ENCODE measurements at regions of chr15 and their contacts with region 1.

Region 1: DNA sequence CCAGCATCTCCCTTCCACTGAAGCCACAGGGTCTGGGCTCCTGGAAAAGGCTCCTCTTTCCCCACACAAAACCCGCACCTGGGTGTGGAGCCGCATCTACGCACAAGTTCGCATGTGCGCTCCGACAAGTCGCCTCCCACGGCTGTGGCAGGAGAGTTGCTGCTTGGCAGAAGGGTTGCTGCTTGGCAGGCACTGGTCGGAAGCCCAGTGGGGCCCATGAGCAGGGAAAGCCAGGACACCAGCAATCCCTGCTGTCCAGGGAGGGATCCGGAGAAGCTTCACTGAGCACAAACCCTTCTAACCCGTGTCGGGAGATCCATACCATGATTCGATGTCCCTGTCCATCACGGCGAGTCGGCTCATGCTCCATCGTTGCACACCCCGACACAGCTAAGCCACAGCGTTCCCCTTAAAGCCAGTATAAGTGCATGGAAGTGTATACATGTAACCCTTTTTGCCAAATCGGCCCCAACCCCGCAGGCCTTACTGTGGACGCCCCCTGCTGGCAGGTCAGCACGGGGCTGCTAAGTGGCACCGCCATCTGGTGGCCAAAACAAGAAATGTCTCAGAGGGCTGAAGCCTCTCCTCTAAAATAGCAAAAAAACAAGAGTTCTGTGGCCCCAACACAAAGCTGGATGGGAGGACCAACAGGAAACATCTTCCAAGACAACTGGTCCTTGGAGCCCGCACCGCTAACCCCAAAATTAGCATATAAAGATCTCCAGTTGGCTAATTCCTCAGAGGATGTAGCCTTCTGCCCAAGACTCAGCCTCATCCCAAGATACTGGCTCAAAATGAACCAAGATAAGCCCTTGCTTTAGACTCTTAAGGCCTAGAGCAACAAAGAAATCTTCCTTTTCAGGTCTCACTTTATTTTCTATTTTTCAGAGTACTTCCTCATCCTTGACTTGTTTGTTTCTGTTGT is 8.3 kb downstream of the ANKRD63 start:
- DNase-seq: peak; percentile 91
- ATAC-seq: peak; percentile 60
- H3K4me3 Mint-ChIP-seq: no peak overlapping the region
- H3K27ac Mint-ChIP-seq: no peak overlapping the region
- H3K4me1 Mint-ChIP-seq: peaks cover 21% of the 10 kb centered on the region
- H3K27me3 Mint-ChIP-seq: peaks cover 25% of the 10 kb centered on the region

Region 2: GRCh38 chr15:40197434-40197833 is 77.2 kb before region 1 on chr15:
- CTCF ChIA-PET with region 1: interaction called, 12 read pairs
- POLR2A ChIA-PET with region 1: no interaction called
- DNase-seq: peak; percentile 32
- ATAC-seq: peak; percentile 53
- H3K4me3 Mint-ChIP-seq: no peak overlapping the region
- H3K27ac Mint-ChIP-seq: peak overlapping the region; percentile 72
- H3K4me1 Mint-ChIP-seq: peaks cover 35% of the 10 kb centered on the region
- H3K27me3 Mint-ChIP-seq: no peaks in the 10 kb centered on the region

Region 3: DNA sequence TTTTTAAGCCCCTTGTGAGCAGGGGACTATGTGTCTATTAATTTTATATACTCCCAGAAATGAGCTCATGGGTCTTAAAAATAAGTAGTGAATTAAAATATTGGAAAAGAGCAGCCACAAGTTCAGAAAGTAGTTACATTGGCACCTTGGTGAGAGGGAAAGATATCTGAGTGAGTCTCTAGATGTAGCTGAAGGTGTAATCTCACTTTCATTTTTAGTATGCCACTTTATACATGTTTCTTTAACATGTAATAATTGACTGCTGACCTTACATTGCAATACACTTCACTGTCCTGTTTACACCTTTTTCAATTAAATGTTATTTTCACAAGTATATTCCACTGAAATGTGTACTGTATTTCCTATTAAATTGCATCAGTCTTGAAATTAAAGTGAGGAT is 47.9 kb before region 1 on chr15:
- CTCF ChIA-PET with region 1: interaction called, 214 read pairs
- POLR2A ChIA-PET with region 1: no interaction called
- DNase-seq: no peak
- ATAC-seq: no peak
- H3K4me3 Mint-ChIP-seq: no peak overlapping the region
- H3K27ac Mint-ChIP-seq: no peak overlapping the region
- H3K4me1 Mint-ChIP-seq: peaks cover 16% of the 10 kb centered on the region
- H3K27me3 Mint-ChIP-seq: no peaks in the 10 kb centered on the region

Region 4: GRCh38 chr15:40256638-40257235 is 17.9 kb before region 1 on chr15:
- CTCF ChIA-PET with region 1: interaction called, 45 read pairs
- POLR2A ChIA-PET with region 1: interaction called, 3 read pairs
- DNase-seq: no peak
- ATAC-seq: peak; percentile 35
- H3K4me3 Mint-ChIP-seq: no peak overlapping the region
- H3K27ac Mint-ChIP-seq: peak overlapping the region; percentile 52
- H3K4me1 Mint-ChIP-seq: peaks cover 12% of the 10 kb centered on the region
- H3K27me3 Mint-ChIP-seq: peaks cover 23% of the 10 kb centered on the region

Region 5: GRCh38 chr15:40307421-40308211 is 33.0 kb after region 1 on chr15 and contains the start of gene PLCB2:
- CTCF ChIA-PET with region 1: interaction called, 559 read pairs
- POLR2A ChIA-PET with region 1: interaction called, 21 read pairs
- DNase-seq: peak; percentile 82
- ATAC-seq: peak; percentile 81
- H3K4me3 Mint-ChIP-seq: peak within 1 kb of the TSS; percentile 99
- H3K27ac Mint-ChIP-seq: peak within 1 kb of the TSS; percentile 98
- H3K4me1 Mint-ChIP-seq: peaks cover 38% of the 10 kb centered on the region
- H3K27me3 Mint-ChIP-seq: peaks cover 13% of the 10 kb centered on the region
- total RNA-seq, gene PLCB2: 133 to 160 TPM

Region 6: GRCh38 chr15:40338041-40338657 is 63.5 kb after region 1 on chr15:
- CTCF ChIA-PET with region 1: interaction called, 101 read pairs
- POLR2A ChIA-PET with region 1: no interaction called
- DNase-seq: peak; percentile 83
- ATAC-seq: peak; percentile 87
- H3K4me3 Mint-ChIP-seq: no peak overlapping the region
- H3K27ac Mint-ChIP-seq: no peak overlapping the region
- H3K4me1 Mint-ChIP-seq: peaks cover 24% of the 10 kb centered on the region
- H3K27me3 Mint-ChIP-seq: no peaks in the 10 kb centered on the region

Region 7: DNA sequence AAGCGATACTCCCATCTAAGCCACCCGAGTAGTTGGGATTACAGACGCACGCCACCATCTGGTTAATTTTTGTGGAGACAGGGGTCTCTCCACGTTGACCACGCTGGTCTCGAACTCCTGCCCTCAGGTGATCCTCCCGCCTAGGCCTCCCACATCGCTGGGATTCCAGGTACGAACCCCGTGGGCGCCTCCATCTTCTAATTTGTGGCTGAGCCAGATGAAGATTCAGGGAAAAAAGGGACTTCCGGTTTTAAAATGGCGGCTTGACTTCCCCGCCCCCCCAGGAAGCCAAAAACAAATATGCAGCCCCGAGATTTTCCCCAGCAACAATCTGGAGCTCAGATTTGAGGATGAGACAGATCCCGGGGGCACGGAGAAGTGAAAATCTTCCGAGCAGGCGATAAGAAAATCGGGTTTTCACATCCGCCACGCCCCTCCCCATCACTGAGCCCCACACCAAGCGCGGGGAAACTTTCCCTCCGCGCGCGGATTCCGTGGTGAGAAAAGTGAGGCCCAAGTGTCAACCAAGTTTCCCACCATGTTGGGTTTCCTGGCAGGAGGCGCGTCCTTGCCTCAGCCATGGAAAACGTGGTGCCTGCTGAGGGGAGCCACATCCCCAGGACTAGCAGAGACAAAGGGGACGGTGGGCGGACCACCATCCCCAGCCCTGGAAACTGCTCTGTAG is 211.6 kb after region 1 on chr15:
- CTCF ChIA-PET with region 1: no interaction called
- POLR2A ChIA-PET with region 1: no interaction called
- DNase-seq: no peak
- ATAC-seq: no peak
- H3K4me3 Mint-ChIP-seq: no peak overlapping the region
- H3K27ac Mint-ChIP-seq: no peak overlapping the region
- H3K4me1 Mint-ChIP-seq: no peaks in the 10 kb centered on the region
- H3K27me3 Mint-ChIP-seq: peaks cover 22% of the 10 kb centered on the region

Region 8: GRCh38 chr15:40694688-40695468 is 420.3 kb after region 1 on chr15 and contains the start of gene RAD51:
- CTCF ChIA-PET with region 1: no interaction called
- POLR2A ChIA-PET with region 1: no interaction called
- DNase-seq: peak; percentile 96
- ATAC-seq: peak; percentile 94
- H3K4me3 Mint-ChIP-seq: peak within 1 kb of the TSS; percentile 100
- H3K27ac Mint-ChIP-seq: peak within 1 kb of the TSS; percentile 100
- H3K4me1 Mint-ChIP-seq: peaks cover 42% of the 10 kb centered on the region
- H3K27me3 Mint-ChIP-seq: no peaks in the 10 kb centered on the region
- total RNA-seq, gene RAD51: 82.7 to 87.3 TPM

Region 9: GRCh38 chr15:40847205-40847961 is 572.8 kb after region 1 on chr15:
- CTCF ChIA-PET with region 1: no interaction called
- POLR2A ChIA-PET with region 1: no interaction called
- DNase-seq: no peak
- ATAC-seq: no peak
- H3K4me3 Mint-ChIP-seq: no peak overlapping the region
- H3K27ac Mint-ChIP-seq: no peak overlapping the region
- H3K4me1 Mint-ChIP-seq: peaks cover 28% of the 10 kb centered on the region
- H3K27me3 Mint-ChIP-seq: peaks cover 16% of the 10 kb centered on the region

Measured in activated CD8-positive, alpha-beta T cell treated with anti-CD3 and anti-CD28 coated beads, Interleukin-2, amount 10 ng/mL, durations not matched to agents 7 days and 5 days (primary cell).